Activated CD4-positive, alpha-beta memory T cell treated with anti-CD3 and anti-CD28 coated beads for 36 hours (primary cell): ENCODE measurements at regions of chr5 and their contacts with region 1.

Region 1: DNA sequence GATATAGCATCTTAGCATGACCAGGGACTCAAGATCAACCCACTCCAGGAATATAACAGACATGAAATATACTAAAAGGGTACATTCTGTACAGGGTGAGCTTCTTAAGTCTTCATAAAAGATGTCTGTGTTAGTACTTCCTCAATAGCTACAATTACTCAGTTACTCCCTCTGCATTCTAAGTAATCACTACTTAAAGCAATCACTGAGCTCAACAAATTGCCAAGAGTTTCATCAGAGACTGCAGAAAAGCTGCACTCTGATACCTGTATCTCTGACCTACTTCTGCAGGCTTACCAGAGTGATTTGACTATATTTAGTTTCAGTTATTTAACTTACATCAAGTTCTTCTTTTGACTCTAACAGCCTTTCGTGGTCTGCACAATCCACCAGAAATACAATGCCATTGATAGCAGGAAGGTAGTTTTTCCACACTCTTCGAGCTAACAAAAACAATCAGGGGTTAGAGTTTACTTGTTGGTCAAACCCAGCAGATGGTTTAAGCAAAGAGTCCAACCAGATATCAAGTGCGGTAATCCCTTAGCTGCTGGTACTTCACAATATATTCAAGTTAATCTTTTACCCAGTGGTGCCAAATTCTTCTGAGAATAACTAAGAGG is 23.3 kb downstream of the SAR1B start:
- DNase-seq: peak; percentile 19
- H3K4me3 Mint-ChIP-seq: peak overlapping the region; percentile 52
- H3K27ac Mint-ChIP-seq: peak overlapping the region; percentile 97
- H3K4me1 Mint-ChIP-seq: peaks cover 54% of the 10 kb centered on the region
- H3K27me3 Mint-ChIP-seq: no peaks in the 10 kb centered on the region

Region 2: GRCh38 chr5:134594797-134595457 is 14.4 kb before region 1 on chr5:
- CTCF ChIA-PET with region 1: no interaction called
- POLR2A ChIA-PET with region 1: interaction called, 4 read pairs
- intact Hi-C with region 1: loop called (anchors 2 kb)
- DNase-seq: peak; percentile 46
- H3K4me3 Mint-ChIP-seq: no peak overlapping the region
- H3K27ac Mint-ChIP-seq: peak overlapping the region; percentile 35
- H3K4me1 Mint-ChIP-seq: peaks cover 29% of the 10 kb centered on the region
- H3K27me3 Mint-ChIP-seq: no peaks in the 10 kb centered on the region

Region 3: GRCh38 chr5:134637161-134637582 is 27.8 kb after region 1 on chr5:
- CTCF ChIA-PET with region 1: interaction called, 5 read pairs
- POLR2A ChIA-PET with region 1: interaction called, 10 read pairs
- intact Hi-C with region 1: loop called (anchors 1 kb)
- DNase-seq: no peak
- H3K4me3 Mint-ChIP-seq: no peak overlapping the region
- H3K27ac Mint-ChIP-seq: no peak overlapping the region
- H3K4me1 Mint-ChIP-seq: peaks cover 8% of the 10 kb centered on the region
- H3K27me3 Mint-ChIP-seq: no peaks in the 10 kb centered on the region